ENCODE measurements at regions of chr2 and their contacts with region 1.

Region 1: DNA sequence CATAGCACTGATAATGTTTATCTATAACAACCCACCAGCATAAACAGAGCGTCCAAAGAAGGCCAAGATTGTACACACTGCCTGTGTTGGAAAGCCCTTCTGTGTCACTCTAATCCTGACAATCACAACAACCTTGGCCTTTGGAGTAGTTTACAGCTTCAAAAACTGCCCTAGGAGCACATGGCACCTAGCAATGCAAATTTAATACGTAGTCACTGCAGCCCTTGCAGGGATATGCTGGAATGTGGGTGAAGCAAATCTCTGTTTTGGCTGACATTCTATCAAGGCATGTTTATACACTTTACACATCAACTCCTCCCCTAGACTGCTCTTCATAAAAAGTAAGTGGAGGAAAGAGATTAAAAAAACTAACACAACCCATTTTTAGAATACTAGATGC is 66.8 kb downstream of the GRB14 start:
- DNase-seq: no peak
- ATAC-seq: peak; percentile 71
- H3K4me3 ChIP-seq: no peak overlapping the region
- H3K27ac ChIP-seq: no peak overlapping the region
- H3K4me1 ChIP-seq: no peaks in the 10 kb centered on the region
- H3K27me3 ChIP-seq: no peaks in the 10 kb centered on the region
- CTCF ChIP-seq: no peak

Region 2: DNA sequence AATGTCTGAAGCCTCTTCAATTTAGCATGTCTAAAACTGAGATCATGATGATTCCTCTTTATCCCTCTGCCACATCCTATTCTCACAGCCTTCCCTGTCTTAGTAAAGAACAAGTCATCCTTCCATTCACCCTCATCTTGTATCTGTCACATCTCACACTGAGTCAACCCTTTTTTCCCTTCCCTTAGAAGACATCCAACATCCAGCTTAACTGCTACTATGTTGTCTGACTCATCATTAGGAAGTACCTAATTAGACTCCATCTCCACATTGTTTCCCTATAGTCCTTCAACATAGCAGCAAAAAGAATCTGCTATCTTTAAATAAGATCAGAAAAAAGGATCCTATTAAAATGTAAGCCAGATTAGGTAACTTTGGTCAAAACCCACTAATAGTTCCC is 152.0 kb after region 1 on chr2:
- intact Hi-C with region 1: loop called in 1 of 2 experiments (anchors 10 kb)
- DNase-seq: no peak
- ATAC-seq: no peak
- H3K4me3 ChIP-seq: no peak overlapping the region
- H3K27ac ChIP-seq: no peak overlapping the region
- H3K4me1 ChIP-seq: no peaks in the 10 kb centered on the region
- H3K27me3 ChIP-seq: no peaks in the 10 kb centered on the region
- CTCF ChIP-seq: no peak

Measured in left lung (tissue), 14 donors.